IMR-90 (cell line): ENCODE measurements at regions of chr7 and their contacts with region 1.

Region 1: GRCh38 chr7:93245525-93246432 is 13.6 kb downstream of the VPS50 start:
- DNase-seq: peak; percentile 38
- ATAC-seq: peak; percentile 51; the same call in 1 of the 2 replicates
- H3K4me3 ChIP-seq: no peak overlapping the region
- H3K27ac ChIP-seq: no peak overlapping the region
- H3K4me1 ChIP-seq: no peaks in the 10 kb centered on the region
- H3K27me3 ChIP-seq: no peaks in the 10 kb centered on the region
- CTCF ChIP-seq: peak; percentile 71
- POLR2A ChIP-seq: no peak
- RAD21 ChIP-seq: peak; percentile 77

Region 2: DNA sequence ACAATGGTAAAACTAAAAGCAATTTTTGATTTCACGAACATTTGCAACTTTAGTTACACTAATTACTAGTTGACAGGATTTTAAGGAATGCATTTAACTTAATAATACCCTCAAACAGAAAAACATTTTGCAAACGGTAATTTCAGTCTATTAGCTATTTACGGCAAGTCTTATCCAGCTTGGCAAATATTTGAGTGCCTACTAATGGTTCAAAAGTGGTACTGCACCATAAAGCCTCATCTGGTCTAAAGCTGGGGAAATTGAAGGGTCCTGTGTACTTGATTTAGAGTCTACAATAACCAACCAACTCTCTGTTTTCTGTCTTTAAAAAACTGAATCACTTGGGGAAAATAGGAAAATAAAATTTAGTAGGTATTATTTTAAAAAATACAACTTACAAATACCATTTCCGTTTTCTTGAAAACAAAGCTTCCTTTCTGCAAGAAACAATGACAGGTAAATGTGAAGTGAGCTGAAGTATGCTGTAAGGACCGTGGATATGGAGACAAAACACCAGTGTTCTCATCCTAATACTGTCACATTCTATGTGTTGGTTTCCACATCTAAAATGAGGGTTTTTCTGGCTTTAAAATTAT is 128.7 kb after region 1 on chr7:
- CTCF ChIA-PET with region 1: interaction called, 29 read pairs
- POLR2A ChIA-PET with region 1: no interaction called
- dilution Hi-C with region 1: no loop called
- in situ Hi-C with region 1: no loop called
- intact Hi-C with region 1: loop called (anchors 1 kb)
- DNase-seq: peak; percentile 39
- ATAC-seq: peak; percentile 98
- H3K4me3 ChIP-seq: no peak overlapping the region
- H3K27ac ChIP-seq: no peak overlapping the region
- H3K4me1 ChIP-seq: no peaks in the 10 kb centered on the region
- H3K27me3 ChIP-seq: peaks cover 8% of the 10 kb centered on the region
- CTCF ChIP-seq: peak; percentile 81
- POLR2A ChIP-seq: no peak
- RAD21 ChIP-seq: peak; percentile 74

Region 3: DNA sequence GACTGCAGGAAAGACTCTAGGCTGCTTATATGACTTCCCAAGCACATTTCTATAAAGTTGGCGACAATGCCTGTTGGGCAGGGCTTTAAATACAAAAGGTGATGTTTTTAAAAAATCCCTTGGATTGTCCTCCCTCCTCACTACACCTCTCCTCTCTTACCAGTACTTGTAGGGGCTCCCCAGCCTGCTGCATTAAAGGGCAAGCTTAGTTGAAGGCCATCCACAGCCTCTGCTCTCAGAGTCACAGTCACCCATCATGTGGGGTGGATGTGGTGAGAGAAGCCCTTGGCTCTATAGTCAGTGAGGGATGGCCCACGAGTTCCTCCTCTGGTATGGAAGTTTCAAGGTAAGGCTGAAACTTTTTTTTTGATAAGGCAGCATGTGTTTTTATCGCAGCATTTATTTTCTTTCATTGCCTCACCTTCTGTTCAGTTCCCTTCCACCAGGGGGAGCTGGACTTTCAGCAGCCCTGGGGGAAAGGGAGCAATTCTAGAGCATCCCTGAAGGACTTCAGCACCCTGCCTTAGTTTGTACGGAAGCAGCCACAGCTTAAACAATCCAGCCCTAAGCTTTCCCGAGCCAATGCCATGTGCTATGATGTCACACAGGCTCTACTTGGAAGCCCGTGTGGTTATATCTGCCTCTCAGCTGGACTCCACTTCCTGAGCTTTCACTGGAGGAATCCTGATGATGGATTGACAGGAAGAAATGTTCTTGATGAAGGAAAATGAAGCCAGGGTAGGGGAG is 196.9 kb after region 1 on chr7:
- CTCF ChIA-PET with region 1: interaction called, 3 read pairs
- POLR2A ChIA-PET with region 1: no interaction called
- dilution Hi-C with region 1: no loop called
- in situ Hi-C with region 1: no loop called
- intact Hi-C with region 1: loop called (anchors 2 kb)
- DNase-seq: peak; percentile 13
- ATAC-seq: peak; percentile 63; the same call in 1 of the 2 replicates
- H3K4me3 ChIP-seq: no peak overlapping the region
- H3K27ac ChIP-seq: no peak overlapping the region
- H3K4me1 ChIP-seq: no peaks in the 10 kb centered on the region
- H3K27me3 ChIP-seq: no peaks in the 10 kb centered on the region; the same call in 1 of the 2 replicates
- CTCF ChIP-seq: peak; percentile 52
- POLR2A ChIP-seq: no peak
- RAD21 ChIP-seq: 0 out of 2 replicates have a peak, but pooled peaks have one; percentile 29

Region 4: GRCh38 chr7:93551063-93551904 is 305.5 kb after region 1 on chr7:
- CTCF ChIA-PET with region 1: interaction called, 18 read pairs
- POLR2A ChIA-PET with region 1: no interaction called
- dilution Hi-C with region 1: no loop called
- in situ Hi-C with region 1: loop called (anchors 5 kb)
- intact Hi-C with region 1: loop called (anchors 1 kb)
- DNase-seq: peak; percentile 56
- ATAC-seq: peak; percentile 54; the same call in 1 of the 2 replicates
- H3K4me3 ChIP-seq: no peak overlapping the region
- H3K27ac ChIP-seq: no peak overlapping the region
- H3K4me1 ChIP-seq: no peaks in the 10 kb centered on the region
- H3K27me3 ChIP-seq: peaks cover 2% of the 10 kb centered on the region; the same call in 1 of the 2 replicates
- CTCF ChIP-seq: peak; percentile 60
- POLR2A ChIP-seq: no peak
- RAD21 ChIP-seq: peak; percentile 52

Region 5: GRCh38 chr7:93715234-93715633 is 469.5 kb after region 1 on chr7:
- CTCF ChIA-PET with region 1: no interaction called
- POLR2A ChIA-PET with region 1: no interaction called
- dilution Hi-C with region 1: no loop called
- in situ Hi-C with region 1: no loop called
- intact Hi-C with region 1: loop called (anchors 10 kb)
- DNase-seq: peak; percentile 39
- ATAC-seq: peak; percentile 82
- H3K4me3 ChIP-seq: no peak overlapping the region
- H3K27ac ChIP-seq: no peak overlapping the region
- H3K4me1 ChIP-seq: no peaks in the 10 kb centered on the region
- H3K27me3 ChIP-seq: no peaks in the 10 kb centered on the region; the same call in 1 of the 2 replicates
- CTCF ChIP-seq: peak; percentile 62
- POLR2A ChIP-seq: no peak
- RAD21 ChIP-seq: peak; percentile 63

Region 6: GRCh38 chr7:93799750-93800357 is 554.1 kb after region 1 on chr7:
- CTCF ChIA-PET with region 1: no interaction called
- POLR2A ChIA-PET with region 1: no interaction called
- dilution Hi-C with region 1: no loop called
- in situ Hi-C with region 1: no loop called
- intact Hi-C with region 1: loop called (anchors 10 kb)
- DNase-seq: peak; percentile 23
- ATAC-seq: no peak
- H3K4me3 ChIP-seq: no peak overlapping the region
- H3K27ac ChIP-seq: no peak overlapping the region
- H3K4me1 ChIP-seq: no peaks in the 10 kb centered on the region
- H3K27me3 ChIP-seq: no peaks in the 10 kb centered on the region
- CTCF ChIP-seq: peak; percentile 67
- POLR2A ChIP-seq: no peak
- RAD21 ChIP-seq: peak; percentile 63